ENCODE measurements at regions of chr7 and their contacts with region 1.

Region 1: DNA sequence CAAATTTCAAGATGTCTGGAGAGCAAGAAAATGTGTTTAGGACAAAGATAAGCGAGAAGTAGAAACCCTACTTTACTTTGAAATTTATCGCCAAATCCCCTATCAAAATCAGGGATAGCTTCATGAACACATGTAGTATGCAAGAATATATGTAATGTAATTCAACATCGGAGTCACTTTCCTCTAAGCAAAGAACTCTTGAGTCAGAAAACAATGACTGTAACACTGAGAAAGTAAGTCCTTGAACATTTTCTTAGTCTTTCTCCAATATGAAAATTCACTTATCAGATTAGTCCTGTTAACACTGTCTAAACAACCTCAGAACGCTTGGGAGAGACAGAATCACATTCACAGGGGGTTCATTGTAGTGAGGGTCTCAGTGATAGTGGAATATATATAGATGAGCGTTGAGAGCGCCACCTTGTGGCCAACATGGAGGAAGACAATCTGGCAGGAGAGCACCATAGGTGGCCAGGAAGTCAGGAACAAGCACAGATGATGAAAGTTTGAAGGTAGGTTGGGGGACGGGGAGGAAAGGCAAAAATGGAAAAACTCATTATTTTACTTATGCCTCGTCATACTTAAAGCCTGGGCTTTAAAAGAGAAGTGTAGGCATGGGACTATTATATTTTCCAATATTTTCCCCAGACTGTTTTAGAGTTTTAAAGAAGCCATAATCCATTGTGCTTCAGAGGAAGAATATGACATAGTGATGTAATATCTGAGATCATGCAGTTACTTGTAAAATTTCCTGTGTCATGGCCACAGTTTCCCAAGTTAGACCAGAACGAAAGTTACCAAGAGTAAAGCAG is 115.5 kb upstream of the GNAI1 start:
- DNase-seq: peak; percentile 61
- H3K4me3 Mint-ChIP-seq: no peak overlapping the region
- H3K27ac Mint-ChIP-seq: no peak overlapping the region
- H3K4me1 Mint-ChIP-seq: no peaks in the 10 kb centered on the region
- H3K27me3 Mint-ChIP-seq: no peaks in the 10 kb centered on the region

Region 2: DNA sequence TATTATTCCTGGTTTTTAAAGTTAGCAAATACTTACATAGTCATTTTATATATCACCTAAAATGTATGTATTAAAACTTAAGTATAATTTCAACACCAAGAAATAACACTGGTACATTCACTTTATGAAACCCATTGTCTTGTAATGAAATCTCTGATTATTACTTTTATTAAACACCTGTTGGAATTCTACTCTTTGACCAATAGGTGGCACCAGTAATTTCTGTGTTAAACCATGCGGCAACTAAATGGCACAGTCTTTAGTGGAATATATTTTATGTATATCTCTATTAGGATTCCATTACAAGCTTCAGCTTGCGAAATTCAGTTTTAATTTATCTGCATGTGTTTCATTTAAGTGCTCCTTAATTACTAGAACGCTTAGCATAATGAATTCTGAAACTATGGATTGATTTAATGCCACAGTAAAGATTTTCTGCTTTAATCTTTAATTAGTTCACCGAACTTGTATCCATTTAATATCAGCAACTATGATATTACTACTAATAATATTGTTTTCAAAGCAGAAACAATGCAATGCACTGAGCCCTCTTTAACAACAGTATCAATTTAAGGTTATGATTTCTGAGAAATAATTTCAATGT is 747.0 kb before region 1 on chr7:
- CTCF ChIA-PET with region 1: no interaction called
- intact Hi-C with region 1: loop called (anchors 1 kb)
- DNase-seq: no peak
- H3K4me3 Mint-ChIP-seq: no peak overlapping the region
- H3K27ac Mint-ChIP-seq: no peak overlapping the region
- H3K4me1 Mint-ChIP-seq: no peaks in the 10 kb centered on the region
- H3K27me3 Mint-ChIP-seq: no peaks in the 10 kb centered on the region

Region 3: DNA sequence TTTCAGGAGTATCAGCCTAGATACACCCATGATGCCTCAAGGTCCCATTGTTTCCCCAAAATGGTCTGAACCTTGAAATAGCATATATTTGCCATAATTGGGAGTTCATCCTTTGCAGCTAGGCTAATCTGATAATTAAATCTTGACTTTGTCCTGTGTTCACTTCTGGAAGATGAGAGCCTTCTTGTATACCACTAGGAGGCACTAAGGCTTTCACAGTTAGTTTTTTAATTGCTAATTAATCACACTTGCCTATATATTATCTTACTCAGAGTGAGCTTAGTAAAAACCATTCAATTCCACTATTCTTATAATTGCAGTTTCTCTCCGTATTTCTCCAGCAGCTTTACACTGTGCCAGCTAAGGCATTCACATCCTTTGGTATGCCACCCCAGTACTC is 517.0 kb before region 1 on chr7:
- CTCF ChIA-PET with region 1: no interaction called
- intact Hi-C with region 1: loop called (anchors 1 kb)
- DNase-seq: no peak
- H3K4me3 Mint-ChIP-seq: no peak overlapping the region
- H3K27ac Mint-ChIP-seq: no peak overlapping the region
- H3K4me1 Mint-ChIP-seq: no peaks in the 10 kb centered on the region
- H3K27me3 Mint-ChIP-seq: no peaks in the 10 kb centered on the region

Region 4: GRCh38 chr7:79842682-79843081 is 176.5 kb before region 1 on chr7:
- CTCF ChIA-PET with region 1: no interaction called
- intact Hi-C with region 1: loop called (anchors 10 kb)
- DNase-seq: no peak
- H3K4me3 Mint-ChIP-seq: no peak overlapping the region
- H3K27ac Mint-ChIP-seq: no peak overlapping the region
- H3K4me1 Mint-ChIP-seq: no peaks in the 10 kb centered on the region
- H3K27me3 Mint-ChIP-seq: no peaks in the 10 kb centered on the region